GM12878 (cell line): ENCODE measurements at regions of chr6 and their contacts with region 1.

Region 1: DNA sequence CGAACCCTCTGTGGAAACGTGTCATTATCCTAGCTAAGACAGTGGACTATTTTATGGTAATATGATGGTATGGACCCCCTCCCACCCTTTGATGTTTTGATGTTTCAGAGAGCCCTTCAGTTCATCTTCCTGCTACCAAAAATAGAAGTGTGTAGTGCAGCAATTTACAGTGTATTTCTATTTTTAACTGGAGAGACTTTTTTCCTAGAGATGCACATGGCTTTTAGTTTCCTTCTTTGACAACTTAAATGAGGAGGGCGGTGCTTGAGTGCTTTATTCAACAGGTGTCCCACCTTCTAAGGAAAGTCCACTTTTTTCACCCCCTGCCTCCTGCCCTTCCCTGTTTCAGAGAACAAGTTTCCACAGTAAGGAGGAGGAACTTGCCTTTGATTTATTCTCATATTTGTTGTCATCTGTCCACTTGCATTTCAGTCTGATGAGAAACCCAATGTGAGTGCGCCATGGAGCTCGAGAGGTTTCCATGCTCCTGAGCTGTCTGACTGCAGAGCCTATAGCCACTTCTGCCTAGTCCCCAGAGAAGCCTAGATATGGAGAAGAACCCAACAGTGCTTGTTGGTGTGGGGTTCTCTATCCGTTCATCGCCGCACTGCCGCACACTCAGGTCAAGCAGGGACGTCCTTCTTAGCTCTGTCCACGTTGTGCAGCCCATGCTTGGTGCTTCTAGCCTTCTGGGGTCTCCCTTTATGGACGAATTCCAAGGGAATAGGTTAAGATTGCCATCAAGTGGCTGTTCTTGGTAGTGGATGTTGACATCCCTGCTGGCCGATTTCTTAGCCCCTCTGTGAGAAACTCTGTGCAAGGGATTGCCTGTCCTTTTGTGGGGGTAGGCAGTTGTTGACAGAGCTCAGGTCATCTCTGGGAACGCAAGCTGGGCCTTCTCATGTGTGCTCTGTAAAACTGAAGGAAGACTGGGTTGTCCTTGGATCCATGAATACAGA is 144.2 kb downstream of the JARID2 start:
- DNase-seq: peak; percentile 52
- ATAC-seq: peak; percentile 56
- H3K4me3 ChIP-seq: no peak overlapping the region
- H3K27ac ChIP-seq: peak overlapping the region; percentile 40
- H3K4me1 ChIP-seq: peaks cover 56% of the 10 kb centered on the region
- H3K27me3 ChIP-seq: no peaks in the 10 kb centered on the region
- CTCF ChIP-seq: peak; percentile 65 to 69 (median 68)
- EP300 ChIP-seq: no peak
- POLR2A ChIP-seq: no peak
- RAD21 ChIP-seq: peak; percentile 87

Region 2: DNA sequence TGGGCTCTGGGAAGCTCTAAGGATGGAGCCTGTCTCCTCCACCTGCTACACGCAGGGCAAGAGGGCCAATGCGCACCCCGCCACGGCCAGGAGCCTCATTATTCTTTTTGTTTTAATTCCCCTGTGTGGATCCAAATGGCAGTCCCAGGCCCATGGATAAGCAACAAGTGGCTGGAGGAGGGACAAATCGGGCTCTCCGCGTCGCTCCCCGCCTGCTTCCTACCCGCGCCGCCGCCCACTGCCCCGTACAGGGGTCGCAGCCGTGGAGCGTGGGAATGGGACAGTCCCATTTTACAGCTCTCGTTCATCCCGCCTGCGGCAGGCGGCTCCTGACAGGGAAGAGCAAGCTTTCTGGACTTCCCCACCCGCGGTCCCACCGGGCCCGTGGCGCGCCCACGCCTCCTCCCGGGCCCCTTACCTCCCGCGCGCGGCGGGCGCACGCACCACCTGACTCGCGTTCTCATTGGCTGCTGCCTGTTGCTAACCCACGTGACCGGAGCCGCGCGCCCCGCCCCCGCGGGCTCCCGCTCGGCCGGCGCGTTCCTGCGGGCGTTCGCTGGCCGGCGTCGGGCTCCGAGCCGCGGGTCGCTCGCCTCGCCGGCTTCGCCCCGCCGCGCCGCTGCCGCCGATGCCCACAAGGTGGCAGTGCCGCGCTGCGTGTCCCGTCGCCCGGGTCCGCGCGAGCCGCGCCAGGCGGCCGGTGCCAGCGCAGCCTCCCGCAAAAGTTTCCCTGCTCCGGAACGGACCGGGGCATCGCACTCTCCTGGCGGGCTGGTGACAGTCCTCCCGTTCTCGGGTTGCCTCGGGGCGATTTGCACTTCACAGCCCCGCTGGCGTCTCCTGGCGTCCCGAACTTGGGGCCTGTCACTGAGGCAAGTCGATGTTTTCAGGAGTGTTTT is 1179.1 kb before region 1 on chr6:
- CTCF ChIA-PET with region 1: no interaction called
- POLR2A ChIA-PET with region 1: no interaction called
- RAD21 ChIA-PET with region 1: no interaction called
- SMC1A ChIA-PET with region 1: no interaction called
- in situ Hi-C with region 1: loop called (anchors 10 kb)
- intact Hi-C with region 1: loop called (anchors 5 kb)
- DNase-seq: peak; percentile 48
- ATAC-seq: peak; percentile 98
- H3K4me3 ChIP-seq: peak overlapping the region; percentile 91
- H3K27ac ChIP-seq: peak overlapping the region; percentile 81
- H3K4me1 ChIP-seq: peaks cover 16% of the 10 kb centered on the region
- H3K27me3 ChIP-seq: no peaks in the 10 kb centered on the region
- CTCF ChIP-seq: peak; percentile 49 to 80 (median 60); a peak in 5 of 6 replicates
- EP300 ChIP-seq: no peak
- POLR2A ChIP-seq: peak; percentile 78
- RAD21 ChIP-seq: peak; percentile 91

Region 3: GRCh38 chr6:15264902-15265761 is 124.9 kb before region 1 on chr6:
- CTCF ChIA-PET with region 1: interaction called, 6 read pairs
- POLR2A ChIA-PET with region 1: interaction called, 4 read pairs
- RAD21 ChIA-PET with region 1: interaction called, 5 read pairs
- SMC1A ChIA-PET with region 1: interaction called, 14 read pairs
- in situ Hi-C with region 1: no loop called
- intact Hi-C with region 1: no loop called
- DNase-seq: no peak
- ATAC-seq: peak; percentile 45
- H3K4me3 ChIP-seq: peak overlapping the region; percentile 26; the same call in 1 of the 2 replicates
- H3K27ac ChIP-seq: peak overlapping the region; percentile 62
- H3K4me1 ChIP-seq: peaks cover 61% of the 10 kb centered on the region
- H3K27me3 ChIP-seq: no peaks in the 10 kb centered on the region
- CTCF ChIP-seq: no peak
- EP300 ChIP-seq: no peak
- POLR2A ChIP-seq: no peak
- RAD21 ChIP-seq: no peak

Region 4: DNA sequence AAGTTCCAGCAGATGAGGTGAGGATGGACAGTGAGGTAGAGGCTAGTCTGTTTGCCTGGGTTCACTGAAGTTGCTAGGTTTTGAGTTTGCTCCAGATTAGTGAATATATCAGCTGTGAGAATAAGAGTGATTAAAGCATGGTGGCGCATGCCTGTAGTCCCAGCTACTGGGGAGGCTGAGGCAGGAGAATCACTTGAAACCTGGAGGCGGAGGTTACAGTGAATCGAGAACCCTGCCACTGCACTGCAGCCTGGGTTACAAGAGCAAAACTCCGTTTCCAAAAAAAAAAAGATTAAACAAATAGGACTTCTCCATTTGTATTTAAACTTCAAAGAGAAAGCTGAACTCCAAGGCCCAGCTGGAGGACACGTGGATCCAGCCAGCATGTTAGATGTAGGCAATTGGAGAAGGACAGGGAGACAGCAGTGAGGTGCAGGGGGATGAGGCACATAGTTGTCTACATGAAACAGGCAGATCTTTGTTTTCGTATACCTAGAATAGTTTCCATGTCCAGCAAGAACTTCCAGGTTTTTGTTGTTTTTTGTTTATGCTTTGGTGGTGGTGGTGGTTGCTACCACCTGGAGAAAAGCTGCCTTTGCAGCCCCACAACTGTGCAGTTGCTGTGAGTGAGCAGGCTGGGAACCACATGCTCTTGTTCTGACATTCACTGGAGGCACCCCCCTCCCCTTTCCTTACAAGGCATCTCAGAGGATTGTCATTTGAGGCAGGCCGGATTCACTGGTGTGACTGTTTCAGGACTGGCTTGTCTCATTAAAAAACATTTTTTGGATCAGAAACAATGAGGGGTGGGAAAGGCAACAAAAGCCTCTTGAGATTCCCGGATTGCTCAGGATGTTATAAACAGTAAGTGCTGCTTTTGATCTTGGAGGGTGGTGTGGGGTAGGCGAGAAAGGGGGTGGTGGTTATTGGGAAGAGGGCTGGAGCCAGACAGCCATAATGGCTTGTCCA is 71.8 kb before region 1 on chr6:
- CTCF ChIA-PET with region 1: interaction called, 146 read pairs
- POLR2A ChIA-PET with region 1: interaction called, 12 read pairs
- RAD21 ChIA-PET with region 1: interaction called, 75 read pairs
- SMC1A ChIA-PET with region 1: interaction called, 123 read pairs
- in situ Hi-C with region 1: no loop called
- intact Hi-C with region 1: no loop called
- DNase-seq: no peak
- ATAC-seq: peak; percentile 52
- H3K4me3 ChIP-seq: peak overlapping the region; percentile 44; the same call in 1 of the 2 replicates
- H3K27ac ChIP-seq: peak overlapping the region; percentile 82
- H3K4me1 ChIP-seq: peaks cover 73% of the 10 kb centered on the region
- H3K27me3 ChIP-seq: no peaks in the 10 kb centered on the region
- CTCF ChIP-seq: no peak
- EP300 ChIP-seq: no peak
- POLR2A ChIP-seq: no peak
- RAD21 ChIP-seq: no peak

Region 5: GRCh38 chr6:15369838-15370237 is 20.2 kb before region 1 on chr6:
- CTCF ChIA-PET with region 1: interaction called, 5 read pairs
- POLR2A ChIA-PET with region 1: interaction called, 5 read pairs
- RAD21 ChIA-PET with region 1: interaction called, 7 read pairs
- SMC1A ChIA-PET with region 1: interaction called, 41 read pairs
- in situ Hi-C with region 1: no loop called
- intact Hi-C with region 1: no loop called
- DNase-seq: no peak
- ATAC-seq: peak; percentile 24; the same call in 2 of the 3 replicates
- H3K4me3 ChIP-seq: no peak overlapping the region
- H3K27ac ChIP-seq: peak overlapping the region; percentile 26; the same call in 1 of the 2 replicates
- H3K4me1 ChIP-seq: peaks cover 12% of the 10 kb centered on the region
- H3K27me3 ChIP-seq: no peaks in the 10 kb centered on the region
- CTCF ChIP-seq: no peak
- EP300 ChIP-seq: no peak
- POLR2A ChIP-seq: no peak
- RAD21 ChIP-seq: no peak

Region 6: DNA sequence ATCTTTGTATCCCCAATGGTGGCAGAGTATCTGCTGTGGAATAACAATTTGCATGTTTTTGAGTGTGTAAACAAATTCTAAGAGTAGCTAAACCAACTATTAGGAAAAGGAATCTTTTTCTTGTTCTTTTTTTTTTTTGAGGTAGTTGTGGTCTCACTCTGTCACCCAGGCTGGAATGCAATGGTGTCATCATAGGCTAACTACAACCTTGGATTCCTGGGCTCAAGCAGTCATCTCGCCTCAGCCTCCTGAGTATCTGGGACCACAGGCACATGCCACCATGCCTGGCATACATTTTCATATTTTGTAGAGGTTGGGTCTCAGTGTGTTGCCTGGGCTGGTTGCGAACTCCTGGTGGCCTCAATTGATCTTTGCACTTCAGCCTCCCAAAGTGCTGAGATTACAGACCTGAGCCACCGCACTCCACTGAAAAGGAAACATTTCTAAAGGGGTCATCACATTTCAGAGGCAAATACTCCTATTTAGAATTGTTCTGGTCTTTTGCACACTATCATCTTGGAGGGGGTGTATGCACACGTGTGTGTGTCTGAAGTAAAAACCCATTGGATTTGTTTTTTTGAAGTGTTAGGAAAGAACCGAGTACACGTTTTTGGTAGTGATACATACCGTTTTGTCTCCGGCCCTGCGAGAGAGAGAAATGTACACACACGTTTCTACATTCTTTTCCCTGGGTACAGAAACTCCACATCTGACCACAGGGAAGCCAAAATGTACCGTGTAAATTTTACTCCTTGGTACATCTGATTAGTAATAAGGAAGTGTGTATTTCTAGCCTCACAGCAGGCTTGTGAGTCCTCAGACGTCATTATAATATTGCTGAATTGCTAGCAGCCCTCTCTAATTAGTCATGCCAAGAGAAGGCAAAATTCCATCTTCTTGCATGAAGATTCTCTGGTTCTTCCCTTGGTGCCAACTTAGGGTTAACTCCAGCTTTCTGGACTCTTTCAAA is 39.4 kb after region 1 on chr6:
- CTCF ChIA-PET with region 1: interaction called, 30 read pairs
- POLR2A ChIA-PET with region 1: interaction called, 4 read pairs
- RAD21 ChIA-PET with region 1: interaction called, 11 read pairs
- SMC1A ChIA-PET with region 1: interaction called, 52 read pairs
- in situ Hi-C with region 1: no loop called
- intact Hi-C with region 1: no loop called
- DNase-seq: no peak
- ATAC-seq: peak; percentile 24
- H3K4me3 ChIP-seq: peak overlapping the region; percentile 3; the same call in 1 of the 2 replicates
- H3K27ac ChIP-seq: peak overlapping the region; percentile 51
- H3K4me1 ChIP-seq: peaks cover 49% of the 10 kb centered on the region
- H3K27me3 ChIP-seq: no peaks in the 10 kb centered on the region
- CTCF ChIP-seq: no peak
- EP300 ChIP-seq: no peak
- POLR2A ChIP-seq: no peak
- RAD21 ChIP-seq: no peak

Region 7: DNA sequence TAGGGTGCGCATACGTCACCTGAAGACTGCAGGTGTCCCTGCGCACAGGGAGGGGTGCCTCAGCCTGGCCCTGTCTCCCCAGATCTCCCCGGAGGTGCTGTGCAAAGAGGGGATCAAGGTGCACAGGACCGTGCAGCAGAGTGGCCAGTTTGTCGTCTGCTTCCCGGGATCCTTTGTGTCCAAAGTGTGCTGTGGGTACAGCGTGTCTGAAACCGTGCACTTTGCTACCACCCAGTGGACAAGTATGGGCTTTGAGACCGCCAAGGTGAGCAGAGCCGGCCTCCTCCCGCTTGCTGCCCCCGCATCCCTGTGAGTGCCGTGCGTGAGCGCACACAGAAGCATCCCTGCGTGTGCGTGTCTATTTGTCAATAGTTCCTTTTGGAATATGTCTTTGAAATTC is 122.1 kb after region 1 on chr6:
- CTCF ChIA-PET with region 1: no interaction called
- POLR2A ChIA-PET with region 1: no interaction called
- RAD21 ChIA-PET with region 1: no interaction called
- SMC1A ChIA-PET with region 1: no interaction called
- in situ Hi-C with region 1: no loop called
- intact Hi-C with region 1: no loop called
- DNase-seq: no peak
- ATAC-seq: 0 out of 3 replicates have a peak, but pooled peaks have one; percentile 13
- H3K4me3 ChIP-seq: no peak overlapping the region
- H3K27ac ChIP-seq: no peak overlapping the region
- H3K4me1 ChIP-seq: no peaks in the 10 kb centered on the region
- H3K27me3 ChIP-seq: no peaks in the 10 kb centered on the region
- CTCF ChIP-seq: no peak; a peak in 1 of 6 replicates
- EP300 ChIP-seq: no peak
- POLR2A ChIP-seq: 0 out of 2 replicates have a peak, but pooled peaks have one; percentile 26
- RAD21 ChIP-seq: no peak